ENCODE measurements at regions of chr11 and their contacts with region 1.

Region 1: DNA sequence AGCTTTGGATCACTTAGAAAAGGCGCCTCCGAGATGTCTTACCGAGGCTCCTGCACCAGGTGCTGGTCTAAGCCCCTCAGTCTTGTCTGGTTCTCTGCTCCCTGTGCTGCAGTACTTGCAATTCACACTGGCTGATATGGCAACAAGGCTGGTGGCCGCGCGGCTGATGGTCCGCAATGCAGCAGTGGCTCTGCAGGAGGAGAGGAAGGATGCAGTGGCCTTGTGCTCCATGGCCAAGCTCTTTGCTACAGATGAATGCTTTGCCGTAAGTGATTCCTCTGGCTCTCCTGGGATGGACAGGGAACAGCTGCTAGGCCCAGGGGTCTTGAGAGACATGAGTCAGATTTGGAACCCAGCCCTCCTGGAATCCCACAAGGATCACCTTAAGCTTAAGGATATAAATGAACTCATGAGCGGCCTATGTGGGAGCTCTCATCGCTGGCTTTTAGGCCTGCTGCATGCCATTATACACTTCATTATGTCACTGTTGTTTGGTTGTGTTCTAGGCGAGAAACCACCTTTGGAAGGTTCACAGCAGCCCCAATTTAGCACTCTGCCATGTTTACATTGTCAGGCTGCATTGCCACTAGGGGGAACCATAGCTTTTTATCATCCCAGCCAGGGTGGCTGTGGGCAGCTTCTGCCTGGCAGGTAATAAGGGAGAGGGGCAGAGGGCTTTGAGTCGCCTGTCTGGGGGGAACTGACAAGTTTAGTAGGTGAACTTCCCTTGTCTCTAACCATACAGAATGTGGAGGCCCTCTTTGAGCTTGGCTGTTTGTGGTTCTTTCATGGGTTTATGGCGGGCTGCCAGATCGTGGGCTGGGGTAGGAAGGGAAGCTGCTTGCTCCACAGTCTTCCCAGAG is 8.5 kb downstream of the ACAD8 start:
- DNase-seq: peak; percentile 30
- H3K4me3 Mint-ChIP-seq: no peak overlapping the region
- H3K27ac Mint-ChIP-seq: no peak overlapping the region
- H3K4me1 Mint-ChIP-seq: peaks cover 8% of the 10 kb centered on the region
- H3K27me3 Mint-ChIP-seq: no peaks in the 10 kb centered on the region

Region 2: DNA sequence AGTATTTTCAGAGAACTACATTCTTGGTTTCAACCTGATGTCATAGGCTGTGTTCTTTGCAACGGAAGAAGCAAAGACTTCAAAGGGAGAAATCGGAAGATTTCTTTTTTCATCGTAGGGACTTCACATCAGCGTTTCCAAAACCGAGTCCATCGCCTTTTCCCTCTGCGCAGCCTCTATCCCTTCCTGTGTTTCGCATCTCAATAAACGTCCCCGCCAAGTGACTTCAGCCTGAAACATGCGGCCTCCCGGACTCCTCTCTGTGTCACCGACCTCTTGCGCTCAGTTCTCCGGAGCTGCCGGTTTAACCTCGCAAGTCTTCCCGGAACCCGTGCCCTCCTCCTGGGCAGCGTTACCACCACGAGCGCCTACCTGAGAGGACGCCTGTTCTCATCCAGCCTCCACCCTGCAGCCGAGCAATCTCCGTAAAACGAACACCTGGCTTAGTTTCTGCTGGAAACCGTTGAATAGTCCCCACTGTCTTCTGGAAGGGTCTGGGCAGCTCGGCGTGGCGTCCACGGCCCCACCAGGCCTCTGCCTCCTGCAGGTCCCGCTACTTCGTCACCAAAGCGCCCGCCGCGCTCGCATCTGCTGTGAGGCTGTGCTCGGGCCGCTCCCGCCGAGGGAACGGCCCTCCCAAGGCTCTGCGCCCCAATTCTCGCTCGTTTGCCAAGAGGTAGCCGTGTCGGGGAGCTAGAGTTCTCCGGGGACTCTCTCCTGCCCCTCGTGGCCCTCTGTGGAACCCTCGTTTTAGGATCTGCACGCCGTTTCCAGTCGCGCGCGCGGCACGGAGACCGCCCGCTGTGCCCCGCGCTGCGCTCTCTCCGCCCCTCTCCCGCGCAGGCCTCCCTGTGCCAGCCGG is 13.9 kb after region 1 on chr11 and contains the start of gene GLB1L3:
- intact Hi-C with region 1: loop called (anchors 1 kb)
- DNase-seq: peak; percentile 81
- H3K4me3 Mint-ChIP-seq: peak within 1 kb of the TSS; percentile 96
- H3K27ac Mint-ChIP-seq: peak within 1 kb of the TSS; percentile 93
- H3K4me1 Mint-ChIP-seq: peaks cover 53% of the 10 kb centered on the region
- H3K27me3 Mint-ChIP-seq: peaks cover 2% of the 10 kb centered on the region
- total RNA-seq, gene GLB1L3: 14.6 and 16.1 TPM in 2 replicates

Measured in activated T-helper 1 cell treated with anti-CD3 and anti-CD28 coated beads, Interleukin-12 subunit alpha, Interleukin-12 subunit beta, Interleukin-2, Interleukin-4 antibody, amounts not matched to agents 30 ng/mL and 10 ng/mL and 1 ng/mL, durations not matched to agents 14 hours and 24 hours and 36 hours (primary cell).